Heart right ventricle (tissue), 16 donors: ENCODE measurements at regions of chr1 and their contacts with region 1.

Region 1: GRCh38 chr1:241998412-241998921 is 431 bp downstream of the MAP1LC3C start:
- DNase-seq: peak; percentile 72 to 81
- ATAC-seq: peak; percentile 75 to 89 (median 82)
- H3K4me3 ChIP-seq: peak overlapping the region in 8 of 10 donors; percentile 4 to 45 (median 40)
- H3K27ac ChIP-seq: peak overlapping the region in 4 of 10 donors; percentile 55 to 72 (median 67)
- H3K4me1 ChIP-seq: peaks cover 0 to 13% (median 7%) of the 10 kb centered on the region in 9 donors
- H3K27me3 ChIP-seq: peaks cover 0 to 7% (median 0%) of the 10 kb centered on the region in 7 donors
- CTCF ChIP-seq: peak; percentile 25 to 79 (median 59)

Region 2: DNA sequence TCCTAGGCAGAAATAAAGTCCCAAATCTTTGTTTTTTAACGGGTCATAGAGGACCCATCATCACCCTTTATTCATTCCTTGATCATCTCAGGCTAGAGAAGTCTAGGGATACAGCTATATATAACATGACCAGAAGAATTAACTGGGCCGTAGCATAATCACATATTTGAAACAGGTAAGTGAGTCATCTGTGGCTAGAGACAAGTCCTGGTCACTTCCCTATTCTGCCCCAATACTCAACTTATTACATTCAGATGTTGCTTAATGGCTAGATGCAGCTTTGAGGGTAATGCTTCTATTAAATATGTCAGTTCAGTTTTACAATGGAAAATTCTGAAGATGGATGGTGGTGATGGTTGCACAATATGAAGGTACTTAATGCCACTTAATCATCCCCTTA is 103.5 kb before region 1 on chr1:
- intact Hi-C with region 1: loop called in 4 of 10 experiments (anchors 5 to 10 kb)
- DNase-seq: no peak
- ATAC-seq: no peak
- H3K4me3 ChIP-seq: no peak overlapping the region
- H3K27ac ChIP-seq: no peak overlapping the region
- H3K4me1 ChIP-seq: no peaks in the 10 kb centered on the region
- H3K27me3 ChIP-seq: no peaks in the 10 kb centered on the region
- CTCF ChIP-seq: no peak

Region 3: GRCh38 chr1:241902391-241903065 is 95.9 kb before region 1 on chr1:
- intact Hi-C with region 1: loop called in 4 of 10 experiments (anchors 5 to 10 kb)
- DNase-seq: peak in 1 of 2 donors; percentile 6
- ATAC-seq: peak in 4 of 8 donors; percentile 11 to 75 (median 44)
- H3K4me3 ChIP-seq: no peak overlapping the region
- H3K27ac ChIP-seq: no peak overlapping the region
- H3K4me1 ChIP-seq: peaks cover 0 to 5% (median 0%) of the 10 kb centered on the region in 9 donors
- H3K27me3 ChIP-seq: no peaks in the 10 kb centered on the region
- CTCF ChIP-seq: no peak

Region 4: DNA sequence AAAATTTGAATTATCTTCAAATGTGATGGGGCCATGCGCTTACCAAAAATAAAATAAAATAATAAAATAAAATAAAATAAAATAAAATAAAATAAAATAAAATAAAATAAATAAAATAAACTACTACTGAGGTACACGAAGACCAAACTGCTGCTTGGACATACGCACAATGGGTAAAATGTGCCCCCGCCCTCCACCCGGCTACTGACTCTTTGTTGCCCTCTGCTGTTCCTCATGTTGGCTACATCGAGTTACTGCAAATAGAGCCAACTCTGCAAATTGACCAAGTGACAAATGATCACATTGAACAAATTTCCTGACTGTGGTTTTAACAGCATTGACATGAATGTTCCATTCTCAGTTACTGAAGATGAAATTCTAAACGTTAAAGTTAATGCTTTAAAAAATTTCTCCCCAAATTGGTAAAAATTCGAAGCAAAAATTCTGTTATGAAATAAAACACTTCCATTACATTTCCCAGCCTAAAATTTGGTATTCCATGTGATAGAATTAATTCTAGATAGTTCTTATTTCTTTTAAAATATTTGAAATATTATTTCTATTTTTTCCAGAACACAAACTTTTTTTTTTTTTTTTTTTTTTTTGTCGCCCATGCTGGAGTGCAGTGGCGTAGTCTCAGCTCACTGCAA is 19.2 kb after region 1 on chr1:
- intact Hi-C with region 1: loop called in 1 of 10 experiments (anchors 2 kb)
- DNase-seq: peak; percentile 20 to 44
- ATAC-seq: peak in 1 of 8 donors; percentile 75
- H3K4me3 ChIP-seq: no peak overlapping the region
- H3K27ac ChIP-seq: no peak overlapping the region
- H3K4me1 ChIP-seq: no peaks in the 10 kb centered on the region
- H3K27me3 ChIP-seq: no peaks in the 10 kb centered on the region
- CTCF ChIP-seq: peak; percentile 37 to 79 (median 67)

Region 5: DNA sequence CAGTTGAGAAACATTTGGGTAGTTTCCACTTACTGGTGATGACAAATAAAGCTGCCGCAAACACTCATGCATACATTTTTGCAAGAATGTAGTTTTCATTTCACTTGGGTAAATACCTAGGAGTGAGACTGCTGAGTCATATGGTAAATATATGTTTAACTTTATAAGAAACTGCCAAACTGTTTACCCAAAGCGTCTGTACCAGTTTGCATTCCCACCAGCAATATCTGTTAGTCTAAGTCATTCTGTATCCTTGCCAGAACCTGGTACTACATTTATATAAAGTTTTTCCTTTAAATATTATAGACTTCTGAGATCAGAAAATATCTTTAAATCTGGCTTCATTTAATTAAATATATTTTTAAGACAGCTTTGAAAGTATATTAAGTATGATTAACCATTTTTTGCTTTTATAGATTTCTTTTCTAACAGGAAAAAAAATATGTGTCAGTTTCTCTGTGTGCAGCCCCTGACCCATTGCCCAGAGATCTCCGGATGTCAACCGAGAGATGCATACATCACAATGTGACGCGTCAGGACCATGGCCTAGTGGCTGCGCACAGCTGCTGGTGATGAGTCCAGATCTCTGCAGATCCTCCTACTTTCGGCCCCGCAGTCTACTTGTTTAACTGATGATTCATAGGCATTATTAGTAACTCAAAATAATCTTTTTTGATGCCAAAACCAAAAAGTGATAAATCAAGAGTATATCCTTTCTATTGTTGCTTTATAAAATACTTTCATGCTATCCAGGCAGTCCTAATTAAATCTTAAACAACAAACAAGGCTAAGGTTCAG is 227.5 kb after region 1 on chr1:
- intact Hi-C with region 1: no loop called
- DNase-seq: no peak
- ATAC-seq: no peak
- H3K4me3 ChIP-seq: no peak overlapping the region
- H3K27ac ChIP-seq: no peak overlapping the region
- H3K4me1 ChIP-seq: no peaks in the 10 kb centered on the region
- H3K27me3 ChIP-seq: peaks cover 0 to 7% (median 0%) of the 10 kb centered on the region in 7 donors
- CTCF ChIP-seq: no peak